SK-N-SH (cell line): ENCODE measurements at regions of chr9 and their contacts with region 1.

Region 1: GRCh38 chr9:137029058-137029936 is 1.3 kb upstream of the ABCA2 start:
- DNase-seq: peak; percentile 90
- H3K4me3 ChIP-seq: peak overlapping the region; percentile 62 to 73; a peak in 3 of 4 replicates
- H3K27ac ChIP-seq: no peak overlapping the region; a peak in 1 of 4 replicates
- H3K4me1 ChIP-seq: peaks cover 5 to 49% of the 10 kb centered on the region in 2 experiments; a peak in 1 of 4 replicates
- H3K27me3 ChIP-seq: no peaks in the 10 kb centered on the region
- CTCF ChIP-seq: peak; percentile 94
- EP300 ChIP-seq: no peak
- RAD21 ChIP-seq: peak; percentile 56

Region 2: GRCh38 chr9:136777359-136777758 is 251.9 kb before region 1 on chr9:
- CTCF ChIA-PET with region 1: interaction called, 12 read pairs
- POLR2A ChIA-PET with region 1: no interaction called
- DNase-seq: no peak
- H3K4me3 ChIP-seq: no peak overlapping the region
- H3K27ac ChIP-seq: no peak overlapping the region
- H3K4me1 ChIP-seq: no peaks in the 10 kb centered on the region
- H3K27me3 ChIP-seq: peaks cover 42% of the 10 kb centered on the region
- CTCF ChIP-seq: no peak
- EP300 ChIP-seq: no peak
- RAD21 ChIP-seq: no peak

Region 3: DNA sequence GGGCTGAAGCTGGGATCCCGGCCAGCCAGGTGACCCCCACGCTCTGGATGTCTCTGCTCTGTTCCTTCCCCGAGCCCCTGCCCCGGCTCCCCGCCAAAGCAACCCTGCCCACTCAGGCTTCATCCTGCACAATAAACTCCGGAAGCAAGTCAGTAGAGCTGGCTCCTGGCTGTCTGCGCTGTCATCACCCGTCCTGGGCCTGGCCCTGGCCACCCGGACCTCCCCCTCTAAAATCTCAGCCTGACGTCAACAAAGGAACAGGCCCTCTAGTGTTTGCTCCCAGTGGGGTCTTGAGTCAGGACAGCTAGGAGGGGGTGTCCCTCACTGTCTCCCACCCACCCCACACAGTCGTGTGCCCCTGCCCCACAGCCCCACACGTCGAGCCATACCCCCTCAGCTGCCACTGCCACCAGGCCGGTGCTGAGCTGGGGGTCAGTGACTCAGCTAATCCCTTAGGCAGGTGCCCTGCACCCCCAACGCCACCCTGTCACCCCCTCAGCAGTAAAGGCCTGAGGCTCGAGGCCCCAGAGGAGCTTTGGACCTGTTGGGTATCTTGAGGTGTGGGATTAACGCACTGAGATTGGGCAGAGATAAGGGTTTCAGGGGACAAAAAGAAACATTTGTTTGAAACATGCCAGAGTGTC is 47.6 kb before region 1 on chr9:
- CTCF ChIA-PET with region 1: interaction called, 14 read pairs
- POLR2A ChIA-PET with region 1: interaction called, 3 read pairs
- DNase-seq: no peak
- H3K4me3 ChIP-seq: no peak overlapping the region
- H3K27ac ChIP-seq: no peak overlapping the region
- H3K4me1 ChIP-seq: peaks cover 0 to 15% of the 10 kb centered on the region in 2 experiments; a peak in 1 of 4 replicates
- H3K27me3 ChIP-seq: no peaks in the 10 kb centered on the region
- CTCF ChIP-seq: no peak
- EP300 ChIP-seq: no peak
- RAD21 ChIP-seq: no peak

Region 4: DNA sequence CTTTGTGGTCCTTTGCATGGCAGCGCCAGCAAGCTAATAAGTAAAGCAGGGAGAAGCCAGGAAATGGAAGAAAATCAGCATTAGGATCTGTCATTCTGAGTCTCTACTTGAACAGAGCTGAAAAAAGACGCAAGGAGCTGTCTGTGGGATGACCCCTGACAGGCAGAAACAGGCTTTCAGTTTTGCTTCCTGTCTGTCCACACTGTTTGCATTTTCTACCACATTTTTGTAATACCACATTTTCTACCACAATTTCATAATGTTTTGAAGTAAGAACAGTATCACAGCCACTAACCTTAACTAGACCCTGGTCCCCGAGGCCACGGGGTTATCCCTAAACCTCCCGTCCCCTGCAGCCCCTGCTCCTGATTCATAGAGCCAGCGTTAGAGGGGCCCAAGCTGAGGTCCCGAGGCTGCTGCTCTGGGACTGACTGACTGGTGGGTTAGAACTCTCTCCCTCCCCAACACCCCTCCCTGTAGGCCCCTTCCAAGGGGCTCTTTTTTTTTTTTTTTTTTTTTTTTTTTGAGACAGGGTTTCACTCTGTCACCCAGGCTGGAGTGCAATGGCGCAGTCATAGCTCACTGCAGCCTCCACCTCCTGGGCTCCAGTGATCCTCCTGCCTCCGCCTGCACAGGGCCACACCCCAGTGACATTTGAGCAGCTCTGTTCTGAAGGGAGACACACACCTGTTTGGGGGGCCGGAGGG is 29.0 kb before region 1 on chr9:
- CTCF ChIA-PET with region 1: interaction called, 68 read pairs
- POLR2A ChIA-PET with region 1: no interaction called
- DNase-seq: no peak
- H3K4me3 ChIP-seq: no peak overlapping the region
- H3K27ac ChIP-seq: no peak overlapping the region
- H3K4me1 ChIP-seq: peaks cover 9 to 13% of the 10 kb centered on the region in 2 experiments; a peak in 3 of 4 replicates
- H3K27me3 ChIP-seq: no peaks in the 10 kb centered on the region
- CTCF ChIP-seq: no peak
- EP300 ChIP-seq: no peak
- RAD21 ChIP-seq: no peak

Region 5: DNA sequence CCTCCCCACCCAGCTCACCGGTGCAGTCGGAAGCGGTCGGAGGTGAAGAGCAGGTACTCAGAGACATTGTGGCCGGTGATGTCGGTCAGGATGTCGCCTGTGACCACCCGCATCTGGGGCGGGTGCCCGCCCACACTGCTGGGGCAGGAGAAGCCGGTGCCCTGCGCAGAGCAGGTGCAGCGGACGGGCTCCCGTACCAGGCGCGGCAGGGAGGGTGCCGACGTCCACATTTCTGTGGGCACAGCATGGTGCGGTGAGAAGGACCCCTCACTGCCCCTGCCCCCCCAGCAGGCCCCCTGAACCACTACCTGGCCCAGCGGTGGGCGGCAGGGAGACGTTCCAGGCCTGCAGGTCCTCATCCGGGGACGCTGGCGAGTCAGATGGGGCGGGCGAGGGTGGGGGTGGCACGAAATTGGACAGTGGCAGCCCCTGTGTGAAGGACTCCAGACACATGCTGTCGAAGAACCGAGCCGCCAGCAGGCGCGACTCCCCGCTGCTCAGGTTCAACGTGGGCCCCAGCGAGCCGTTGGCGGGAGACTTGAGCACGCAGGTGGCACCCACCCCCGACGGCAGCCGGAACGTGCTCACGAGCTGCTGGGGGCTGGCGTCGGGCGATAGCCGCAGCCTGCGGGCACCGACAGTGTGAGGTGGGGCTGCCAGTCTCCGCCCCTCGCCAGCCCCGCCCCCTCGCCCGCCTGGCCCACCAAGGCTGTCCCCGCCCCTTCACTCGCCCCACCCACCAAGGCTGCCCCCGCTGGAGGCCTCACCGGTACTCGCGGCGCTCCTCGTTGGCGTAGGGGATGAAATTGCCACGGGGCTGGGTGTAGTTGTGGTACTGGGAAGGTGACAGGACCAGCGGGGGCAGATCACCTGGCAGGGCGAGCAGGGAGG is 16.4 kb before region 1 on chr9:
- CTCF ChIA-PET with region 1: interaction called, 16 read pairs
- POLR2A ChIA-PET with region 1: no interaction called
- DNase-seq: peak; percentile 63
- H3K4me3 ChIP-seq: no peak overlapping the region
- H3K27ac ChIP-seq: no peak overlapping the region
- H3K4me1 ChIP-seq: no peaks in the 10 kb centered on the region
- H3K27me3 ChIP-seq: no peaks in the 10 kb centered on the region
- CTCF ChIP-seq: no peak
- EP300 ChIP-seq: no peak
- RAD21 ChIP-seq: no peak

Region 6: GRCh38 chr9:137055385-137056364 is 26.4 kb after region 1 on chr9:
- CTCF ChIA-PET with region 1: interaction called, 107 read pairs
- POLR2A ChIA-PET with region 1: interaction called, 3 read pairs
- DNase-seq: peak; percentile 94
- H3K4me3 ChIP-seq: no peak overlapping the region
- H3K27ac ChIP-seq: peak overlapping the region; percentile 32 to 96; a peak in 3 of 4 replicates
- H3K4me1 ChIP-seq: peaks cover 0 to 29% of the 10 kb centered on the region in 2 experiments; a peak in 2 of 4 replicates
- H3K27me3 ChIP-seq: no peaks in the 10 kb centered on the region
- CTCF ChIP-seq: no peak
- EP300 ChIP-seq: peak in 1 of 2 experiments; percentile 66; a peak in 2 of 4 replicates
- RAD21 ChIP-seq: peak; percentile 20; the same call in 1 of the 2 replicates

Region 7: GRCh38 chr9:137077010-137077747 is 47.9 kb after region 1 on chr9 and contains the start of gene UAP1L1:
- CTCF ChIA-PET with region 1: interaction called, 156 read pairs
- POLR2A ChIA-PET with region 1: no interaction called
- DNase-seq: peak; percentile 85
- H3K4me3 ChIP-seq: peak within 1 kb of the TSS; percentile 57 to 60
- H3K27ac ChIP-seq: no peak within 1 kb of the TSS
- H3K4me1 ChIP-seq: peaks cover 0 to 11% of the 10 kb centered on the region in 2 experiments; a peak in 1 of 4 replicates
- H3K27me3 ChIP-seq: no peaks in the 10 kb centered on the region
- CTCF ChIP-seq: no peak
- EP300 ChIP-seq: no peak
- RAD21 ChIP-seq: no peak
- polyA plus RNA-seq, gene UAP1L1: 3.2 and 5.6 TPM in 2 replicates